CD4-positive, alpha-beta T cell (primary cell): ENCODE measurements at regions of chr15 and their contacts with region 1.

Region 1: GRCh38 chr15:22240951-22241350 is 160.6 kb downstream of the OR4M2 start:
- DNase-seq: no peak
- ATAC-seq: no peak
- H3K4me3 ChIP-seq: no peak overlapping the region
- H3K4me3 Mint-ChIP-seq: no peak overlapping the region
- H3K27ac ChIP-seq: no peak overlapping the region
- H3K27ac Mint-ChIP-seq: no peak overlapping the region
- H3K4me1 ChIP-seq: peaks cover 4% of the 10 kb centered on the region
- H3K4me1 Mint-ChIP-seq: no peaks in the 10 kb centered on the region
- H3K27me3 ChIP-seq: no peaks in the 10 kb centered on the region
- H3K27me3 Mint-ChIP-seq: peaks cover 33% of the 10 kb centered on the region
- CTCF ChIP-seq: no peak

Region 2: GRCh38 chr15:20367093-20367492 is 1873.9 kb before region 1 on chr15:
- CTCF ChIA-PET with region 1: no interaction called
- POLR2A ChIA-PET with region 1: no interaction called
- intact Hi-C with region 1: loop called in 1 of 2 experiments (anchors 2 kb)
- DNase-seq: no peak
- ATAC-seq: no peak
- H3K4me3 ChIP-seq: no peak overlapping the region
- H3K4me3 Mint-ChIP-seq: no peak overlapping the region
- H3K27ac ChIP-seq: no peak overlapping the region
- H3K27ac Mint-ChIP-seq: no peak overlapping the region
- H3K4me1 ChIP-seq: no peaks in the 10 kb centered on the region
- H3K4me1 Mint-ChIP-seq: no peaks in the 10 kb centered on the region
- H3K27me3 ChIP-seq: no peaks in the 10 kb centered on the region
- H3K27me3 Mint-ChIP-seq: no peaks in the 10 kb centered on the region
- CTCF ChIP-seq: no peak

Region 3: GRCh38 chr15:22262613-22263020 is 21.7 kb after region 1 on chr15:
- CTCF ChIA-PET with region 1: no interaction called
- POLR2A ChIA-PET with region 1: interaction called, 3 read pairs
- intact Hi-C with region 1: loop called in 1 of 2 experiments (anchors 2 kb)
- DNase-seq: peak in 10 of 14 experiments; percentile 10 to 82 (median 46)
- ATAC-seq: peak; percentile 45
- H3K4me3 ChIP-seq: peak overlapping the region; percentile 33
- H3K4me3 Mint-ChIP-seq: no peak overlapping the region
- H3K27ac ChIP-seq: peak overlapping the region in 1 of 2 donors; percentile 2
- H3K27ac Mint-ChIP-seq: no peak overlapping the region
- H3K4me1 ChIP-seq: peaks cover 52% of the 10 kb centered on the region
- H3K4me1 Mint-ChIP-seq: peaks cover 27% of the 10 kb centered on the region
- H3K27me3 ChIP-seq: peaks cover 3 to 4% of the 10 kb centered on the region in 2 experiments
- H3K27me3 Mint-ChIP-seq: peaks cover 27% of the 10 kb centered on the region
- CTCF ChIP-seq: no peak